ENCODE measurements at regions of chr1 and their contacts with region 1.

Region 1: DNA sequence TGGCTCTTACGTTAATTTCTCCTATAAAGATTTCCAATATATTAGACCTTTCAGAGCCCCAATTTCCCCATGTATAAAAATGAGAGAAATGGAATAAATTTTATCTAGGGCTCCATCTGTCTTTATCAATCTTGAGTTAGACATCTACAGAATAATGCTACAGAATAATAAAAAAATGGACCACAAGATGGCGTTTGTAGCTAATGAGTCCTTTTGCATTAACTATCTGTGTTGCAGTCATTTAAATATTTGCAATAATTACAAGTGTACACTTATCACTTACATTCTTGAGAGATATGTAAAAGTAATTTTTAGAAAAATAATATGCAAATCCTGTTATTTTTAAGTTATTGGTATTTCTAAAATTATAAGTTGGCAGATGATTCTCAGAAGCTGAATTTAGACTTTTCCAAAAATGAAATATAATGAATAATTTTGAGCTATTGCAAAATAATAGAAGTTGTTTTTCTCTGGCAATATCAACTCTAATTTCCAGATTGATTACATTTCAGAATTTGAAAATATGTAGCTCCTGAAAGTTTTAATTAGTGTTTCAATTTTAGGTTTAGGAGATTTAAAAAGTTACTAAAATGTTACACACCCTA is 87.7 kb downstream of the SNX7 start:
- DNase-seq: peak in 5 of 9 donors; percentile 9 to 26 (median 16)
- ATAC-seq: no peak
- H3K4me3 ChIP-seq: no peak overlapping the region
- H3K4me3 Mint-ChIP-seq: no peak overlapping the region
- H3K27ac ChIP-seq: no peak overlapping the region
- H3K27ac Mint-ChIP-seq: no peak overlapping the region
- H3K4me1 ChIP-seq: no peaks in the 10 kb centered on the region
- H3K4me1 Mint-ChIP-seq: peaks cover 0 to 5% (median 0%) of the 10 kb centered on the region in 7 donors
- H3K27me3 ChIP-seq: no peaks in the 10 kb centered on the region
- H3K27me3 Mint-ChIP-seq: peaks cover 0 to 7% (median 0%) of the 10 kb centered on the region in 5 donors

Region 2: DNA sequence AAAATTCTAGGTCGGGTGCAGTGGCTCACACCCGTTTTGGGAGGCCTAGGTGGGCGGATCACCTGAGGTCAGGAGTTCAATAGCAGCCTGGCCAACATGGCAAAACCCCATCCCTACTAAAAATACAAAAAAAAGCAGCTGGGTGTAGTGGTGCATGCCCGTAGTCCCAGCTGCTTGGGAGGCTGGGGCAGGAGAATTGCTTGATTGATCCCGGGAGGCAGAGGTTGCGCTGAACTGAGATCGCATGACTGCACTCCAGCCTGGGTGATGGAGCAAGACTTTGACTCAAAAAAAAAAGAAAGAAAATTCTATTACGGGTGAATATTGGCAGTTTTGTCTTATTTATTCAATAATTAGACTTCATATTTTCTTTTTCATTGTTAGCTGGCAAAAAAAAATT is 25.7 kb before region 1 on chr1:
- CTCF ChIA-PET with region 1: no interaction called
- POLR2A ChIA-PET with region 1: no interaction called
- intact Hi-C with region 1: no loop called
- DNase-seq: no peak
- ATAC-seq: no peak
- H3K4me3 ChIP-seq: no peak overlapping the region
- H3K4me3 Mint-ChIP-seq: no peak overlapping the region
- H3K27ac ChIP-seq: no peak overlapping the region
- H3K27ac Mint-ChIP-seq: no peak overlapping the region
- H3K4me1 ChIP-seq: no peaks in the 10 kb centered on the region
- H3K4me1 Mint-ChIP-seq: no peaks in the 10 kb centered on the region
- H3K27me3 ChIP-seq: no peaks in the 10 kb centered on the region
- H3K27me3 Mint-ChIP-seq: peaks cover 0 to 33% (median 11%) of the 10 kb centered on the region in 5 donors

Region 3: GRCh38 chr1:98940722-98941079 is 191.4 kb after region 1 on chr1:
- CTCF ChIA-PET with region 1: interaction called, 4 read pairs
- POLR2A ChIA-PET with region 1: no interaction called
- intact Hi-C with region 1: loop called in 1 of 2 experiments (anchors 1 kb)
- DNase-seq: no peak
- ATAC-seq: no peak
- H3K4me3 ChIP-seq: no peak overlapping the region
- H3K4me3 Mint-ChIP-seq: no peak overlapping the region
- H3K27ac ChIP-seq: no peak overlapping the region
- H3K27ac Mint-ChIP-seq: no peak overlapping the region
- H3K4me1 ChIP-seq: no peaks in the 10 kb centered on the region
- H3K4me1 Mint-ChIP-seq: peaks cover 0 to 5% (median 2%) of the 10 kb centered on the region in 7 donors
- H3K27me3 ChIP-seq: no peaks in the 10 kb centered on the region
- H3K27me3 Mint-ChIP-seq: no peaks in the 10 kb centered on the region

Region 4: GRCh38 chr1:98991127-98992012 is 242.1 kb after region 1 on chr1:
- CTCF ChIA-PET with region 1: no interaction called
- POLR2A ChIA-PET with region 1: no interaction called
- intact Hi-C with region 1: no loop called
- DNase-seq: no peak
- ATAC-seq: no peak
- H3K4me3 ChIP-seq: no peak overlapping the region
- H3K4me3 Mint-ChIP-seq: no peak overlapping the region
- H3K27ac ChIP-seq: no peak overlapping the region
- H3K27ac Mint-ChIP-seq: peak overlapping the region in 3 of 9 donors; percentile 34 to 42 (median 39)
- H3K4me1 ChIP-seq: no peaks in the 10 kb centered on the region
- H3K4me1 Mint-ChIP-seq: peaks cover 0 to 9% (median 8%) of the 10 kb centered on the region in 7 donors
- H3K27me3 ChIP-seq: no peaks in the 10 kb centered on the region
- H3K27me3 Mint-ChIP-seq: peaks cover 0 to 4% (median 0%) of the 10 kb centered on the region in 5 donors

Region 5: DNA sequence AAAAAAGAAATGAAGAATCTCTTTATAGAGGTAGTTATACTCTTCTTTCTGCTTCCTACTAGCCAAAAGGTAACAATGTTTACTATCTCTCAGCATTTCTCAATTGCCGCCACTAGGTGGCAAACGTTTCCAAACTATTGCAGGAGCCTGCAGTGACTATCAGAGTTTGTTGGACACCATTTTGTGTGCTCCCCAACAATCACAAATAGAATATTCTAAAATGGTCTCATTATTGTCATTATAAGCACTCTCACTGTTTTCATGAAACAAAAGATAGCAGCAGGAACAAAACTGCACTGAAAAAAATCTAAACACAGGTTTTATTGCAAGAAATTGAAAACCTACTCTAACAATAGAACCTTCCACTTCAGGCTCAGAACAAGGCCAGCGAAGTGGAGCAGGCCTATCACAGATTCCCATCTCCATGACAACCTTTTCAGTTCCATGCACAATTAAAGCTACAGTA is 431.1 kb after region 1 on chr1:
- CTCF ChIA-PET with region 1: no interaction called
- POLR2A ChIA-PET with region 1: no interaction called
- intact Hi-C with region 1: loop called in 1 of 2 experiments (anchors 2 kb)
- DNase-seq: peak in 8 of 9 donors; percentile 17 to 65 (median 51)
- ATAC-seq: peak; percentile 82
- H3K4me3 ChIP-seq: no peak overlapping the region
- H3K4me3 Mint-ChIP-seq: no peak overlapping the region
- H3K27ac ChIP-seq: no peak overlapping the region
- H3K27ac Mint-ChIP-seq: no peak overlapping the region
- H3K4me1 ChIP-seq: no peaks in the 10 kb centered on the region
- H3K4me1 Mint-ChIP-seq: no peaks in the 10 kb centered on the region
- H3K27me3 ChIP-seq: no peaks in the 10 kb centered on the region
- H3K27me3 Mint-ChIP-seq: peaks cover 0 to 6% (median 0%) of the 10 kb centered on the region in 5 donors

Region 6: DNA sequence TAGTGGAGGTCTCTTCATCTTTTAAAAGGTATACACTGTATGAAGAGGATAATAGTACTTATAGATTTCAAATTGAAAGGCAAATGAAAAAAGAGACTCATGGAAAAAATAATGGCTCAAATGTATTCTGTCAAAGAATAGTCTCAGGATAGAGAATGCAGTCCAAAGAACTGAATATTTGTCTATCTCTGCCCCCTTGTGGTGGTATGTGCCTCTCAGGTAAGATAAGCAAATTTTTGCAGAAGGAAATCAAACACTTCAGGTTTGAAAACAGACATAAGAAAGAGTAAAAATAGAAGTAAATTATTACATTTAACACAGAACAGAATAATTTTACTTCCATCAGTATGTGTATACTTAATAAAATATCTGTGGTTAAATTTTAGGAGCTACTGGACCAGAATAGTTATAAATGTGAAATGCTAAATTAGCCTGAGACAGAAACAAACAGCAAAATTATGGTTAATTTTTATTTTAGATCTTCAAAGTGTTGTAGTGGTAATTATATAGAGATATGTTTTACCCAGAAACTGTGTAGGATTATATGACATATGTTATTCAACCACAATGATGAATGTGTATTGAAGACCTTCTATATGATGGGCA is 732.2 kb after region 1 on chr1:
- CTCF ChIA-PET with region 1: interaction called, 37 read pairs
- POLR2A ChIA-PET with region 1: no interaction called
- intact Hi-C with region 1: loop called (anchors 1 to 2 kb)
- DNase-seq: peak in 7 of 9 donors; percentile 6 to 61 (median 47)
- ATAC-seq: peak; percentile 59
- H3K4me3 ChIP-seq: no peak overlapping the region
- H3K4me3 Mint-ChIP-seq: no peak overlapping the region
- H3K27ac ChIP-seq: no peak overlapping the region
- H3K27ac Mint-ChIP-seq: no peak overlapping the region
- H3K4me1 ChIP-seq: no peaks in the 10 kb centered on the region
- H3K4me1 Mint-ChIP-seq: no peaks in the 10 kb centered on the region
- H3K27me3 ChIP-seq: no peaks in the 10 kb centered on the region
- H3K27me3 Mint-ChIP-seq: peaks cover 8 to 35% (median 17%) of the 10 kb centered on the region in 5 donors

Region 7: DNA sequence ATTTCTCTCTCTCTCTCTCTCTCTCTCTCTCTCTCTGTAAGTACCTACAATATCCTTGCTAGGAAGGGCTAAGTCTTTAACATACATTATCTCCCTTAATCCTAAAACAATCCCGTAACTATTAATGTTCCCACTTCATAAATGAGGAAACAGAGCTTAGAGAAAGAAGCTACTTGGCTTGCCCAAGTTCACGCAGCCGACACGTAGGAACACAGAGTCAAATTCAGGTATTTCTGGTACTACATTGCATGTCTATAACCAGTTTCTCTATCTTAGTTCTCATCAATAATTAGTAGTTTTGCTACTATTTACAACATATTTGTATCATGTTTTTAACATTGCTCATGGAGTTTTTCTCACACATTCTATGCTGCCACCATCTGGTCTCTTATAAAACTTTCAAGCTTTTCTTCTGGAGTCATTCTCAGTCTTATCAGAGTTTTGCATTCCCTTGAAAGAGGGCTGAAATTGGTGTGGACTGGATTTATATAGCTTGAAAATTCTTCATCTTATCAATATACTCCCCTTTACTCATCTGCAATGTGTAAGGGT is 777.7 kb after region 1 on chr1:
- CTCF ChIA-PET with region 1: no interaction called
- POLR2A ChIA-PET with region 1: no interaction called
- intact Hi-C with region 1: loop called in 1 of 2 experiments (anchors 1 kb)
- DNase-seq: no peak
- ATAC-seq: no peak
- H3K4me3 ChIP-seq: no peak overlapping the region
- H3K4me3 Mint-ChIP-seq: no peak overlapping the region
- H3K27ac ChIP-seq: no peak overlapping the region
- H3K27ac Mint-ChIP-seq: no peak overlapping the region
- H3K4me1 ChIP-seq: no peaks in the 10 kb centered on the region
- H3K4me1 Mint-ChIP-seq: no peaks in the 10 kb centered on the region
- H3K27me3 ChIP-seq: no peaks in the 10 kb centered on the region
- H3K27me3 Mint-ChIP-seq: peaks cover 8 to 21% (median 12%) of the 10 kb centered on the region in 5 donors

Region 8: DNA sequence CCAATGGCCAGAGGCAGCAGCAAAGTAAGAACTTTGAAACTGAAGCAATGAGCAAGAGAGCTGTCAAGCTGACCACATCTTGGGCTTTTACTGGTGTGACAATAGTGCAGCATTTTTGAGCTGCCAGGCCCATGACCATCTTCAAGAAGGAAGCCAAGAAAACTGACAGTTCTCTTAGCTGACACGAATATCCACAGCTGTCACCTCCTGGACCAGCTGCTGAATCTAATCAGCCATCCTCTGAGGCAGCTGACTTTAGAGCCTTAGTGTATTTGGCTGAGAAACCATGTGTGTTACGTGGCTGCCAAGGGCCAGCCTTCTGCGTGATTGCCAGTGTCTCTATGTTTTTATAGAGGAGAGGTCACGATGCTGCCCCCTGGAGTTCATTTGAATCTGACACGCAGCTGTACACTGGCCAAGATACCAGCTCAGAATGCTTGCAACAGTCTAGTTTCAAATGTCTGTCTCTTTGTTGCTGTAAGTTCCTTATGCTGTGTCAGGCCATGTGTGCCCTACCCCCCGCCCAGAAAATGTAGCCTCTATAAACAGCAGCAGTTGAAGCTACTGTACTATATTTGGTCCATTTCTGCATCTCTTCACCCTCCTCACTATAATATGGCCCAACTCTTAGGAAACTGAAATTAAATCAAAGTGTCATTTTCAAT is 936.4 kb after region 1 on chr1:
- CTCF ChIA-PET with region 1: no interaction called
- POLR2A ChIA-PET with region 1: no interaction called
- intact Hi-C with region 1: loop called in 1 of 2 experiments (anchors 1 kb)
- DNase-seq: peak in 4 of 9 donors; percentile 6 to 22 (median 8)
- ATAC-seq: peak; percentile 61
- H3K4me3 ChIP-seq: no peak overlapping the region
- H3K4me3 Mint-ChIP-seq: no peak overlapping the region
- H3K27ac ChIP-seq: no peak overlapping the region
- H3K27ac Mint-ChIP-seq: no peak overlapping the region
- H3K4me1 ChIP-seq: no peaks in the 10 kb centered on the region
- H3K4me1 Mint-ChIP-seq: no peaks in the 10 kb centered on the region
- H3K27me3 ChIP-seq: peaks cover 0 to 3% of the 10 kb centered on the region in 2 donors
- H3K27me3 Mint-ChIP-seq: peaks cover 0 to 16% (median 15%) of the 10 kb centered on the region in 5 donors

Region 9: DNA sequence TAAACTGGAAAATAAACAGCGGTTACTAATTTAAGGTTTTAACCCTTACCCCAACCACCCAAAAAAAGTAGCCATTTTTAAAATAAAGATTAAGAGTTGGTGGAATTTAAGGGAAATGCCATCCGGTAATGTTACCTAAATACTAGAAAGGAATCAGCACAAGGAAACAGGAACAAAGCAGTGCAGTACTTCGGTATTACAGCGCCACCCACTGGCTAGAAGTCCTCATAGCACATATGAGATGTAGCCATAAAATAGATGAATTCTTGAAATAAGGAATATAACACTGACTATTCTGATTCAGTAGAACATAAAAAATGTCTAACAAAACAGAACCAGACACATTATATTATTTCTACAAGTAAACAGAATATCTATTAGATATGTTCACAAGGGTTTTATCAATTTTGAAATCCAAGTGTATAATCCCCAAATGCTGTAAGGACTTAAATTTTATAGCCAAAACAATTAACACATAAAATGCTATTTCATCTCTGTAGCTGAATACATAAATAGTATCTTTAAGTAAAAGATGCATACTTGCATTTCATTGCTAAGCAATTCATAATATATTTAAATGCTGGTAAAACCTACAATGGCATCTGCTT is 958.4 kb after region 1 on chr1:
- CTCF ChIA-PET with region 1: no interaction called
- POLR2A ChIA-PET with region 1: no interaction called
- intact Hi-C with region 1: loop called in 1 of 2 experiments (anchors 2 kb)
- DNase-seq: peak in 6 of 9 donors; percentile 7 to 46 (median 16)
- ATAC-seq: peak; percentile 75
- H3K4me3 ChIP-seq: no peak overlapping the region
- H3K4me3 Mint-ChIP-seq: no peak overlapping the region
- H3K27ac ChIP-seq: no peak overlapping the region
- H3K27ac Mint-ChIP-seq: no peak overlapping the region
- H3K4me1 ChIP-seq: peaks cover 0 to 7% of the 10 kb centered on the region in 2 donors
- H3K4me1 Mint-ChIP-seq: peaks cover 5 to 22% (median 10%) of the 10 kb centered on the region in 7 donors
- H3K27me3 ChIP-seq: no peaks in the 10 kb centered on the region
- H3K27me3 Mint-ChIP-seq: peaks cover 0 to 3% (median 0%) of the 10 kb centered on the region in 5 donors

Measured in naive thymus-derived CD4-positive, alpha-beta T cell (primary cell).